ENCODE measurements at regions of chr2 and their contacts with region 1.

Region 1: GRCh38 chr2:198098918-198099317 is 294.5 kb downstream of the PLCL1 start:
- DNase-seq: no peak
- ATAC-seq: no peak
- H3K4me3 Mint-ChIP-seq: no peak overlapping the region
- H3K27ac Mint-ChIP-seq: no peak overlapping the region
- H3K4me1 Mint-ChIP-seq: peaks cover 10% of the 10 kb centered on the region
- H3K27me3 Mint-ChIP-seq: no peaks in the 10 kb centered on the region

Region 2: GRCh38 chr2:198117406-198118041 is 18.6 kb after region 1 on chr2:
- CTCF ChIA-PET with region 1: interaction called, 12 read pairs
- POLR2A ChIA-PET with region 1: no interaction called
- intact Hi-C with region 1: no loop called
- DNase-seq: no peak
- ATAC-seq: no peak
- H3K4me3 Mint-ChIP-seq: no peak overlapping the region
- H3K27ac Mint-ChIP-seq: no peak overlapping the region
- H3K4me1 Mint-ChIP-seq: peaks cover 10% of the 10 kb centered on the region
- H3K27me3 Mint-ChIP-seq: no peaks in the 10 kb centered on the region

Region 3: DNA sequence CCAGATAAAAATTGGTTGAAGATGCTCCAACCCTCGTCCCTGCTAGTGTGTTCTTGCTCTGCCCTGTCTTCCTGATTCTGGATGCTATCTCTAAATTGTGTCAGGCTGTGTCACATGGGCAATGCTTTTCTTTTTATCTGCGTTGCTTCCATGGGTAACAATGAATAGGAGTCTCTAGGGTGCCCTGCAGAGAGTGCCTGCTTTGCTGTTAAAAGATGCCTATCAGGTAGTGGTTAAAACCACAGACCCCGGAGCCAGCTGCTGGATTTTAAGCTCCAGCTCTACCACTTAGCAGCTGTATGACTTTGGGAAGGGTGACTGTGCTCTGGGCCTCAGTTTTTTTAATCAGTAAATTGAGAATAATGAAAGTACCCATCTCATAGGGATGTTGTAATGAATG is 45.7 kb after region 1 on chr2:
- CTCF ChIA-PET with region 1: no interaction called
- POLR2A ChIA-PET with region 1: no interaction called
- intact Hi-C with region 1: no loop called
- DNase-seq: no peak
- ATAC-seq: no peak
- H3K4me3 Mint-ChIP-seq: no peak overlapping the region
- H3K27ac Mint-ChIP-seq: no peak overlapping the region
- H3K4me1 Mint-ChIP-seq: peaks cover 12% of the 10 kb centered on the region
- H3K27me3 Mint-ChIP-seq: no peaks in the 10 kb centered on the region

Measured in activated CD4-positive, alpha-beta T cell treated with anti-CD3 and anti-CD28 coated beads for 36 hours (primary cell).